CD8-positive, alpha-beta T cell (primary cell): ENCODE measurements at regions of chr12 and their contacts with region 1.

Region 1: DNA sequence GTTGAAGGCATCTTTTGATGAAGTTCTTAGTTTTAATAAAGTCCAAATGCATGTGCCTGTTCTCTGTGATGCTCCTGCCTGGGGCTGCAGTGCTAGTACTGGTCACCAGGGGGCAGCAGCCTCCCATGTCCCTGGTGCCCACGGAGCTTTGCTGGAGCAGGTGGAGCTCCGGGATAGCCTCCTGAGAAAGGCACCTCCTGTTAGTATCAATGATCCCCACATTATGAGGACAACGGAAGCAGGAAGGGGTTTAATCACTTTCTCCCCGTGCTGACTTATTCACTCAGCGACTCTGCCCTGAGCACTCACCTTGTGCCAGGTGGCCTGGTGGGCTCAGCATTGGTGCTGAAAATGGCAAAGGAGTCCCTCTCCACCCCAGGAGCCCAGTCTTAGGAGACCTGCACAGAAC is 123.0 kb upstream of the PZP start:
- DNase-seq: peak; percentile 45 to 82 (median 71)
- ATAC-seq: peak; percentile 81
- H3K4me3 ChIP-seq: no peak overlapping the region
- H3K4me3 Mint-ChIP-seq: no peak overlapping the region
- H3K27ac ChIP-seq: no peak overlapping the region
- H3K27ac Mint-ChIP-seq: no peak overlapping the region
- H3K4me1 ChIP-seq: peaks cover 17% of the 10 kb centered on the region
- H3K4me1 Mint-ChIP-seq: peaks cover 23% of the 10 kb centered on the region
- H3K27me3 ChIP-seq: no peaks in the 10 kb centered on the region
- H3K27me3 Mint-ChIP-seq: no peaks in the 10 kb centered on the region
- CTCF ChIP-seq: peak; percentile 94

Region 2: DNA sequence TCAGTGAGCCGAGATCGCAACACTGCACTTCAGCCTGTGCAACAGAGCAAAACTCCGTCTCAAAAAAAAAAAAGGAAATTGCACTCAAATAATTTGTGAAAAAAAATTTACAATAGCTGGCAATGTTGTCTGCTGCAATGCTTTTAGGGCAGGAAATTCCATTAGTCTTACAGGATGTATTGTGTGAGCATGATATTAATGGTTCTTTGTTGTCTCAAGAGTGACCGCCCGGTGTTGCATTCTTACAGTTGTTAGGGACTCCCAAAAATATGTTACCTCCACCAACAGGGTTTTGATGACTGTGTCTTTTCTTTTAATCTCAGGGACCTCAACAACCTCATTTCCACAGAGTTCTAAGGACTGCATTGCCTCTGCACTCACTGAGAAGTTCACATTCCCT is 167.8 kb before region 1 on chr12:
- CTCF ChIA-PET with region 1: no interaction called
- POLR2A ChIA-PET with region 1: no interaction called
- intact Hi-C with region 1: no loop called
- DNase-seq: no peak
- ATAC-seq: no peak
- H3K4me3 ChIP-seq: no peak overlapping the region
- H3K4me3 Mint-ChIP-seq: no peak overlapping the region
- H3K27ac ChIP-seq: no peak overlapping the region
- H3K27ac Mint-ChIP-seq: no peak overlapping the region
- H3K4me1 ChIP-seq: no peaks in the 10 kb centered on the region
- H3K4me1 Mint-ChIP-seq: no peaks in the 10 kb centered on the region
- H3K27me3 ChIP-seq: no peaks in the 10 kb centered on the region
- H3K27me3 Mint-ChIP-seq: no peaks in the 10 kb centered on the region
- CTCF ChIP-seq: no peak

Region 3: DNA sequence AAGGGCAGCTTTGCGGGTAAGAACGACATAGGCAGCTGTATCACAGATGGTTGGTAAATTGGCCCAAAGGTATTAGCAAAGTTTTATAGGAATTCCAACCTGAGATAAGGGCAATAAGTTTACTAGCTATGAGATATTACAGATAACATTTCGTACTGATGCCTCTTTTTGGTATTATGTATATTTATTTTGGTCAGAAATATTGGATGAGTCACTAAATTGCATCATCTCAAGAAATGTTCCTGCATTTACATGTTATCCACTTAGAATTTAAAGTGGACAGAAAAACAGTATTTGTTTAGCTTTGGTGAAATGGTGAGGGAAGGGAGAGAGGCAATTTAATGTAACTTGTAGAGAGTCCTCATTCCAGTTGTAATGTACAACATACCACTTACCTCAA is 57.9 kb before region 1 on chr12:
- CTCF ChIA-PET with region 1: no interaction called
- POLR2A ChIA-PET with region 1: no interaction called
- intact Hi-C with region 1: no loop called
- DNase-seq: no peak
- ATAC-seq: no peak
- H3K4me3 ChIP-seq: no peak overlapping the region
- H3K4me3 Mint-ChIP-seq: no peak overlapping the region
- H3K27ac ChIP-seq: no peak overlapping the region
- H3K27ac Mint-ChIP-seq: no peak overlapping the region
- H3K4me1 ChIP-seq: no peaks in the 10 kb centered on the region
- H3K4me1 Mint-ChIP-seq: no peaks in the 10 kb centered on the region
- H3K27me3 ChIP-seq: no peaks in the 10 kb centered on the region
- H3K27me3 Mint-ChIP-seq: peaks cover 2% of the 10 kb centered on the region
- CTCF ChIP-seq: no peak

Region 4: GRCh38 chr12:9347328-9348127 is 16.3 kb after region 1 on chr12:
- CTCF ChIA-PET with region 1: interaction called, 10 read pairs
- POLR2A ChIA-PET with region 1: no interaction called
- intact Hi-C with region 1: no loop called
- DNase-seq: no peak
- ATAC-seq: no peak
- H3K4me3 ChIP-seq: no peak overlapping the region
- H3K4me3 Mint-ChIP-seq: no peak overlapping the region
- H3K27ac ChIP-seq: no peak overlapping the region
- H3K27ac Mint-ChIP-seq: no peak overlapping the region
- H3K4me1 ChIP-seq: peaks cover 13% of the 10 kb centered on the region
- H3K4me1 Mint-ChIP-seq: peaks cover 29% of the 10 kb centered on the region
- H3K27me3 ChIP-seq: no peaks in the 10 kb centered on the region
- H3K27me3 Mint-ChIP-seq: no peaks in the 10 kb centered on the region
- CTCF ChIP-seq: no peak

Region 5: GRCh38 chr12:9464408-9464807 is 133.2 kb after region 1 on chr12:
- CTCF ChIA-PET with region 1: interaction called, 33 read pairs
- POLR2A ChIA-PET with region 1: no interaction called
- intact Hi-C with region 1: loop called (anchors 1 to 2 kb)
- DNase-seq: no peak
- ATAC-seq: no peak
- H3K4me3 ChIP-seq: no peak overlapping the region
- H3K4me3 Mint-ChIP-seq: no peak overlapping the region
- H3K27ac ChIP-seq: no peak overlapping the region
- H3K27ac Mint-ChIP-seq: no peak overlapping the region
- H3K4me1 ChIP-seq: no peaks in the 10 kb centered on the region
- H3K4me1 Mint-ChIP-seq: peaks cover 11% of the 10 kb centered on the region
- H3K27me3 ChIP-seq: no peaks in the 10 kb centered on the region
- H3K27me3 Mint-ChIP-seq: no peaks in the 10 kb centered on the region
- CTCF ChIP-seq: no peak

Region 6: GRCh38 chr12:9588749-9589148 is 257.5 kb after region 1 on chr12:
- CTCF ChIA-PET with region 1: interaction called, 3 read pairs
- POLR2A ChIA-PET with region 1: no interaction called
- intact Hi-C with region 1: loop called in 1 of 2 experiments (anchors 10 kb)
- DNase-seq: no peak
- ATAC-seq: no peak
- H3K4me3 ChIP-seq: no peak overlapping the region
- H3K4me3 Mint-ChIP-seq: no peak overlapping the region
- H3K27ac ChIP-seq: no peak overlapping the region
- H3K27ac Mint-ChIP-seq: no peak overlapping the region
- H3K4me1 ChIP-seq: no peaks in the 10 kb centered on the region
- H3K4me1 Mint-ChIP-seq: no peaks in the 10 kb centered on the region
- H3K27me3 ChIP-seq: no peaks in the 10 kb centered on the region
- H3K27me3 Mint-ChIP-seq: no peaks in the 10 kb centered on the region
- CTCF ChIP-seq: no peak

Region 7: GRCh38 chr12:9741726-9742125 is 410.5 kb after region 1 on chr12:
- CTCF ChIA-PET with region 1: interaction called, 11 read pairs
- POLR2A ChIA-PET with region 1: no interaction called
- intact Hi-C with region 1: loop called in 1 of 2 experiments (anchors 5 kb)
- DNase-seq: peak; percentile 44 to 95 (median 67)
- ATAC-seq: peak; percentile 59
- H3K4me3 ChIP-seq: peak overlapping the region; percentile 13 to 19
- H3K4me3 Mint-ChIP-seq: peak overlapping the region; percentile 77
- H3K27ac ChIP-seq: peak overlapping the region; percentile 63 to 68
- H3K27ac Mint-ChIP-seq: peak overlapping the region; percentile 97
- H3K4me1 ChIP-seq: peaks cover 60% of the 10 kb centered on the region
- H3K4me1 Mint-ChIP-seq: peaks cover 67% of the 10 kb centered on the region
- H3K27me3 ChIP-seq: no peaks in the 10 kb centered on the region
- H3K27me3 Mint-ChIP-seq: no peaks in the 10 kb centered on the region
- CTCF ChIP-seq: no peak

Region 8: DNA sequence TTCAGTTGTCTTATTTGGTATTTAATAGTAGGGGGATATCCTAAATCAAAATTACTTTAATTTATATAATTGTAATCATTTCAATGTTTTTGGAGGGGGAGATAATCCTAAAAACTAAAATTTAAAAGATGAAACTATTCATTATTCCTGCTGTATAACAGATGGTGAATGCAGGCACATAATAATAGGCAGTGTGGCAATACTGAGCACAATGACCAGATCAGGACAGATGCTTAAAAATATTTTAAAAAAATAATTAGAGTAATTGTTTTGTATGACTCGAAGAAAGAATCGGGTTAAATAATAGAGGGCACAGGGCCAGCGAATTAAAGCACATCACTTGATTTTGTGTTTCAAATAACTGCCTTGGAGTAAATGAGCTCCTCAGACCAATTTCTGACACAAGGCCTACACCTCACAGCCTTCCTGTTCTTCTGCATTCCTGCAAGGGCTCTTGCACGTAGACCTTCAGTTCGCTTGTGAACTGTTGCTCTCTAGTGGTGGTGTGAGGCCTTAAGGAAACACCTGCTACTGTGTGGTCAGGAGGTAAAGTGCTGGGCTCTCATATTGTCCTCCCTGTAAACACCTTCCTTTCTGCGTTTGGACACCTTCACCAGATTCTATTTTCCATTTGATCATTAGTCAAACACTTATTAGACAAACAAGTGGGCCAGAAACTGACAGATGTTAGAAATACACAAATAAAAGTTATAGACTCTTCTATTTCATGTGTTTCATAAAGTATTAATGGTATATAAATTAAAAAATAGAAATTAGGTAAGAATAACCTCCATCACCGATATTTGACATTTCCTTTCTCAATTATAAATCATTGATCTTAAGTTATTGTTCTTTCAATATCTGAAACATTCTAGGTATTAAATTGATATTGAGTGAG is 466.7 kb after region 1 on chr12:
- CTCF ChIA-PET with region 1: interaction called, 3 read pairs
- POLR2A ChIA-PET with region 1: no interaction called
- intact Hi-C with region 1: loop called in 1 of 2 experiments (anchors 5 kb)
- DNase-seq: peak; percentile 37 to 91 (median 67)
- ATAC-seq: peak; percentile 95
- H3K4me3 ChIP-seq: no peak overlapping the region
- H3K4me3 Mint-ChIP-seq: no peak overlapping the region
- H3K27ac ChIP-seq: no peak overlapping the region
- H3K27ac Mint-ChIP-seq: peak overlapping the region; percentile 46
- H3K4me1 ChIP-seq: peaks cover 49% of the 10 kb centered on the region
- H3K4me1 Mint-ChIP-seq: peaks cover 45% of the 10 kb centered on the region
- H3K27me3 ChIP-seq: no peaks in the 10 kb centered on the region
- H3K27me3 Mint-ChIP-seq: no peaks in the 10 kb centered on the region
- CTCF ChIP-seq: peak; percentile 86

Region 9: DNA sequence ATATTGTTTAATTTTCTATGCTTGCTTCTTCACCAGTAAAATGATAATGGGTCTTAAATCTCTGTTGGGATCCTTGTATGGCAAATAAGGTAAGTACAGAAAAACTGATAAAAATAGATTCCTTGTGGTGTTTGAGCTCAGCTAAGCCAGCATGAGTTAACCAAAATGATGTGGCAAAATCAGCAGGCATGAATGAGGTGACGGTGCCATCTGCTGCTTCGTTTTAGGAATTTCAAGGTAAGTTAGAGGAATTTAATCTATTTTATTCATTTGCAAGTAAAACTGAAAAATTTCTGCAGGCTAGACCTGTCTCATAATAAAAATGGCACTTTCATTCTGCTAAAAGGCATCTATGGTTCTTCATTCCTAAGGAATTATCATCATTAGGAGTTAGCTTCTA is 808.8 kb after region 1 on chr12:
- CTCF ChIA-PET with region 1: no interaction called
- POLR2A ChIA-PET with region 1: no interaction called
- intact Hi-C with region 1: loop called in 1 of 2 experiments (anchors 5 kb)
- DNase-seq: peak in 6 of 9 experiments; percentile 9 to 69 (median 46)
- ATAC-seq: peak; percentile 51
- H3K4me3 ChIP-seq: no peak overlapping the region
- H3K4me3 Mint-ChIP-seq: no peak overlapping the region
- H3K27ac ChIP-seq: no peak overlapping the region
- H3K27ac Mint-ChIP-seq: no peak overlapping the region
- H3K4me1 ChIP-seq: no peaks in the 10 kb centered on the region
- H3K4me1 Mint-ChIP-seq: peaks cover 2% of the 10 kb centered on the region
- H3K27me3 ChIP-seq: peaks cover 0 to 4% of the 10 kb centered on the region in 2 experiments
- H3K27me3 Mint-ChIP-seq: peaks cover 6% of the 10 kb centered on the region
- CTCF ChIP-seq: peak; percentile 68